Activated naive CD4-positive, alpha-beta T cell treated with anti-CD3 and anti-CD28 coated beads for 36 hours (primary cell): ENCODE measurements at regions of chr18 and their contacts with region 1.

Region 1: DNA sequence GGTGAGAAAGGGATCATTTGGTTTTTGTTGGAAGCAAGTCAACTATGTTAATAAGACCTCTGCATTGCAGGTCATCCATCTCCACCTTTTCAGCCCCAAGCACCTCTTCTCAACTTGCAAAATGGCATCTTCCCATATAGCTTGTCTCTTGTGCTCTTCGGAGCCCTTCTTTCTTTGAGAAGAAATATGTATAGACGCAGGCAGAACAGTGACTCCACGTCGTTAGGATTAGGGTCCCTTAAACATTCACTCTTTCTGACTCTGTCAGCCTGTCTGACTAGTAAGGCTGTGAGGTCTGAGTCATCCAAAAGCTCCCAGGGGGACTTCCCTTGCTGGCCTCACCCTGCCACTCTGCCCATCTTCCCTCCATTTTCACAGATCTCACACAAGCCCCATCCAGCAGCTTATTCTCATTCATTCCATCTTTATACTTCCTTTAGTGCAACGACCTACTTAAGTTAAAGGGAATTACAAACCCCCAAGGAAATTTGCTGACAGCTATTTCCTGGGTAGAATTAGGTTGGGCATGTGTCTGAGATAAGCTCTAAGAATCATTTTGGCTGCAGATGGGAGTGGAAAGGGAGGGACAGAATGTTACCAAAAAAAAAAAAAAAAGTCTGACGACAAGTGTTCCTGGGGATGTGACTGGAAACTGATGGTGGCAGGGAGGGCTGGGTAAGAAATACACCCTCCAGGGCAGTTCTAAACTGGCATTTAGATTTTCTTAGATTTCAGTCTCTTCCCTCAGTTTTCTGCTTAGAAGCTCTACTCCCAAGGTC is 37.7 kb upstream of the MEX3C start:
- DNase-seq: peak; percentile 74
- H3K4me3 Mint-ChIP-seq: no peak overlapping the region
- H3K27ac Mint-ChIP-seq: peak overlapping the region; percentile 68
- H3K4me1 Mint-ChIP-seq: peaks cover 20% of the 10 kb centered on the region
- H3K27me3 Mint-ChIP-seq: peaks cover 7% of the 10 kb centered on the region

Region 2: GRCh38 chr18:50545936-50546335 is 689.3 kb before region 1 on chr18:
- CTCF ChIA-PET with region 1: no interaction called
- intact Hi-C with region 1: no loop called
- DNase-seq: no peak
- H3K4me3 Mint-ChIP-seq: no peak overlapping the region
- H3K27ac Mint-ChIP-seq: no peak overlapping the region
- H3K4me1 Mint-ChIP-seq: no peaks in the 10 kb centered on the region
- H3K27me3 Mint-ChIP-seq: peaks cover 5% of the 10 kb centered on the region

Region 3: DNA sequence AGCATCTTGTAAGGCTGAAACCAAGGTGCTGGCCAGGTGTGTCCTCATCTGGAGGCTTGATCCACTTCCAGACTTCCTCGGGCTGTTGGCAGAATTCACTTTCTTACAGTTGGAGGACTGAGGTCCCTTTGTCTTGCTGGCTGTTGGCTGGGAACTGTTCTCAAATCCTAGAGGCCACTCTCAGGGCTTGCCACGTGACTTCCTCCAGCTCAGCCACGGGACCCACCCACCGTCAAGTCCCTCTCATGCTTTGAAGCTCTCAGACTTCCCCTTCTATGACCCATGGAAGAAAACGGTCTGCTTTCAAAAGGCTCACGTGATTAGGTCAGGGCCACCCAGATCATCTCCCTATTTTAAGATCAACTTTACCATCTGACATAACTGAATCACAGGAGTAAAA is 128.1 kb before region 1 on chr18:
- CTCF ChIA-PET with region 1: no interaction called
- intact Hi-C with region 1: no loop called
- DNase-seq: no peak
- H3K4me3 Mint-ChIP-seq: no peak overlapping the region
- H3K27ac Mint-ChIP-seq: no peak overlapping the region
- H3K4me1 Mint-ChIP-seq: peaks cover 17% of the 10 kb centered on the region
- H3K27me3 Mint-ChIP-seq: no peaks in the 10 kb centered on the region

Region 4: DNA sequence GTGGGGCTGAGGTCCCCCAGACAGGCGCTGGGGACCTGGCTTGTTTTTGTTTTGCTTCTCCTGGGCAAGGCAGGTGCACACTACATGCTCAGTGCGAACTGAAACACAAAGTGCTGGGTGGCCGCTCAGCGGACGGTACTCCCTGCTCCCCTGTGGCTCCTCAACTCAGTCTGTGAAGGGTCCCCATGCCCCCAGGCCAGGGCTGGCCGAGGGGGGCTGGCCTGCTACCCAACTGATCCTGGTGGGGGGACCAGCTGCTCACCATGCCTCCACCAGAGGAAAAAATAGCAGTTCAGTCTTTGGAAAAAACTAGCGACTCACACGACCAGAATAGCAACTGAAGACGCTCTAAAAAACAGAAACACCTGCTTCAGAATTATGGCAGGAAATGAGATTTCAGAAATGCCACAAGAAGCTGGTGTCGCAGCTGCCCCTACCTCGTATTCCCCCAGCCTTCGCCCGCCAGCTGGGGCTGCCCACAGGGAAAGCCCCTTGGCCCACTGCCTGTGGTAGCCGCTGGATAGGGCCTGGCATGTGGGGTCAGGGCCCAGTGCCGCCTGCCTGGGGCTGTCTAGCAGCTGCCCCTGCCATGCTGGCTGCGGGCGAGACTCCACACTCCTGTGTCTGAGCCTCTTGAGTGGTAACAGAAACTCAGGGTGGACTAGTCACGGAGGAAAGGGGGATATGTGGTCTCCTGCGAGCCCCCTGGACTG is 81.4 kb before region 1 on chr18:
- CTCF ChIA-PET with region 1: no interaction called
- intact Hi-C with region 1: loop called (anchors 1 kb)
- DNase-seq: peak; percentile 70
- H3K4me3 Mint-ChIP-seq: peak overlapping the region; percentile 79
- H3K27ac Mint-ChIP-seq: peak overlapping the region; percentile 99
- H3K4me1 Mint-ChIP-seq: peaks cover 58% of the 10 kb centered on the region
- H3K27me3 Mint-ChIP-seq: no peaks in the 10 kb centered on the region

Region 5: DNA sequence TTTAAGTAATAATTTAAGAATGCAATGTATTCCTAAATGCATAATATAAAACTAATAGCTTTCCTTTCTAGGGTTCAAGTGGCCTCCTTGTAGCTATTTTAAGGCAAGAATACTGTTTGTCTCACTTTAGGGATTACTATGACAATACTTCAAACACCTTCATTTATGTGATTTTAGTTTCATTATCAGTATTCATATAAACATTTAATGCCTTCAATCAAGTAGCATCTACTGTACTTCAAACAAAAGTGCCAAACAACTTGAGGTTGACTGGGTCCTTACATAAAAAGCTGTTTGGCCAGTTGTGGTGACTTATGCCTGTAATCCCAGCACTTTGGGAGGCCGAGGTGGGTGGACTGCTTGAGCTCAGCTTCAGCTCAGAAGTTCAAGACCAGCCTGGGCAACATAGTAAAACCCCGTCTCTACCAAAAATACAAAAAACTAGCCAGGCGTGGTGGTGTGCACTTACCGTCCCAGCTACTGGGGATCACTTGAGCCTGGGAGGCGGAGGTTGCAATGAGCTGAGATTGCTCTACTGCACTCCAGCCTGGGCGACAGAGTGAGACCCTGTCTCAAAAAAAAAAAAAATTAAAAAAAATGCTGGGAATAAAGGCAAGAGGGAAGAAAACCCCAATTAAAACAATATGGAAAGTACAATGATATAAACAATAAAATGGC is 47.0 kb before region 1 on chr18:
- CTCF ChIA-PET with region 1: no interaction called
- intact Hi-C with region 1: no loop called
- DNase-seq: no peak
- H3K4me3 Mint-ChIP-seq: peak overlapping the region; percentile 39
- H3K27ac Mint-ChIP-seq: peak overlapping the region; percentile 46
- H3K4me1 Mint-ChIP-seq: peaks cover 76% of the 10 kb centered on the region
- H3K27me3 Mint-ChIP-seq: no peaks in the 10 kb centered on the region

Region 6: GRCh38 chr18:51211552-51211951 is 23.6 kb before region 1 on chr18:
- CTCF ChIA-PET with region 1: no interaction called
- intact Hi-C with region 1: loop called (anchors 1 kb)
- DNase-seq: peak; percentile 71
- H3K4me3 Mint-ChIP-seq: no peak overlapping the region
- H3K27ac Mint-ChIP-seq: no peak overlapping the region
- H3K4me1 Mint-ChIP-seq: peaks cover 13% of the 10 kb centered on the region
- H3K27me3 Mint-ChIP-seq: no peaks in the 10 kb centered on the region

Region 7: GRCh38 chr18:51711298-51711889 is 476.2 kb after region 1 on chr18:
- CTCF ChIA-PET with region 1: no interaction called
- intact Hi-C with region 1: no loop called
- DNase-seq: no peak
- H3K4me3 Mint-ChIP-seq: no peak overlapping the region
- H3K27ac Mint-ChIP-seq: no peak overlapping the region
- H3K4me1 Mint-ChIP-seq: no peaks in the 10 kb centered on the region
- H3K27me3 Mint-ChIP-seq: peaks cover 3% of the 10 kb centered on the region